ENCODE measurements at regions of chrX and their contacts with region 1.

Region 1: DNA sequence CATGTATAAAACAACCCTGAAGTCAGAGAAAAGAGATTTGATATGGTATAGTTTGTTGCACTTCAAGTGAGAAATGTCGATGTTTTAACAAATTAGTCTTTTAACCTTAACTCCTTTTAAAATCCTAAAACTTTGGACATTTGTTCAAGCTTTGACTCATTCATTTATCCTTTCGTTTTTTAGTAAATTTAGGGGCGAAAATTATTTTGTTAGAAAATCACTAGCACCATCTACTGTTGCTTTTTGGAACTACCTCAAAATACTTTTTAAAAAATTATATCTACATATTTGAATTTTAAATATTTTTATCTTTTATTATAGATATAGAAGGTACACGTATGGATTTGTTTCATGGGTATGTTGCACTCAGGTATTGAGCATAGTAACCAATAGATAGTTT is 165.1 kb upstream of the POF1B start:
- DNase-seq: no peak
- ATAC-seq: no peak
- H3K4me3 Mint-ChIP-seq: no peak overlapping the region
- H3K27ac Mint-ChIP-seq: no peak overlapping the region
- H3K4me1 Mint-ChIP-seq: no peaks in the 10 kb centered on the region
- H3K27me3 Mint-ChIP-seq: no peaks in the 10 kb centered on the region

Region 2: DNA sequence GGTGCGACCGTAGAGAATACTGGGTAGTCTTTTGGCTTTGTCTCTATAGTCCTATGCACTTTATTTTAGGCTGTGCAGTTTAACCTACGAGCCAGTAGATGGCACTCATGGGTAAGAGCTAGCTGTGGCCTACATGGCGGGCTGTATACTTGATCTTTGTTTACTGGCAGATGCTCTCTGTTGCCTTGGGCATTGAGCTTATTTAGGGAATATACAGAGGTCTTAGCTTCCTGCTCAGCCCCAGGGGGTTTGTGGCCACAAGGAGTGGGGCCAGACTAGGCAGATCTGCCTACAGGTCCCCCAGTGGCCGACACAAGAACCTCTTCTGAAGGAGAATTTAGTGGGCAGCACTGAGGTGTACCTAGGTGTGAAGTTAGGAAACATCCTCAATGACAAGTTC is 814.8 kb before region 1 on chrX:
- CTCF ChIA-PET with region 1: no interaction called
- POLR2A ChIA-PET with region 1: no interaction called
- intact Hi-C with region 1: loop called in 1 of 2 experiments (anchors 2 kb)
- DNase-seq: peak; percentile 7
- ATAC-seq: peak; percentile 75
- H3K4me3 Mint-ChIP-seq: no peak overlapping the region
- H3K27ac Mint-ChIP-seq: no peak overlapping the region
- H3K4me1 Mint-ChIP-seq: no peaks in the 10 kb centered on the region
- H3K27me3 Mint-ChIP-seq: no peaks in the 10 kb centered on the region

Region 3: GRCh38 chrX:85084770-85085393 is 459.7 kb before region 1 on chrX:
- CTCF ChIA-PET with region 1: interaction called, 4 read pairs
- POLR2A ChIA-PET with region 1: no interaction called
- intact Hi-C with region 1: loop called in 1 of 2 experiments (anchors 5 kb)
- DNase-seq: peak; percentile 22
- ATAC-seq: peak; percentile 44
- H3K4me3 Mint-ChIP-seq: no peak overlapping the region
- H3K27ac Mint-ChIP-seq: no peak overlapping the region
- H3K4me1 Mint-ChIP-seq: no peaks in the 10 kb centered on the region
- H3K27me3 Mint-ChIP-seq: no peaks in the 10 kb centered on the region

Region 4: DNA sequence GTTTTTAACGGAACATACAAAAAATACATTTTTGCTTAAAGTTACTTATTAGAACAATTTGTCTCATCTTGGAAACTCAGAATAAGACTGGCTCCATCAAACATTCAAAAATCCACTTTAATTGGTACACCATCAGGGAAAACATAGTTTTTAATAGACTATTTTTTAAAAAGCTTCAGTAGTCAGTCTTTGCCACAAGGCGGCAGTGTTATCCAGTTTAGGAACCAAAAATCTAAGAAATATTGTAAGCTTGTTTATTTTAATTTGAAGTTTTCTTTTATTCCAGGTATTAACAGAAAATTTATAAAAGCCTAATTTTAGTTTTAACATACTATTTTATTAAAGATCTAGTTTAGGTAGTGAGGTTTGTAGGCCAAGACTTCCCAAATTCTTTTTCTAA is 433.3 kb before region 1 on chrX:
- CTCF ChIA-PET with region 1: interaction called, 7 read pairs
- POLR2A ChIA-PET with region 1: no interaction called
- intact Hi-C with region 1: loop called (anchors 1 to 2 kb)
- DNase-seq: peak; percentile 17
- ATAC-seq: no peak
- H3K4me3 Mint-ChIP-seq: no peak overlapping the region
- H3K27ac Mint-ChIP-seq: no peak overlapping the region
- H3K4me1 Mint-ChIP-seq: no peaks in the 10 kb centered on the region
- H3K27me3 Mint-ChIP-seq: no peaks in the 10 kb centered on the region

Measured in activated CD4-positive, alpha-beta T cell treated with anti-CD3 and anti-CD28 coated beads for 36 hours (primary cell).